Activated CD8-positive, alpha-beta T cell treated with anti-CD3 and anti-CD28 coated beads for 36 hours (primary cell): ENCODE measurements at regions of chr7 and their contacts with region 1.

Region 1: DNA sequence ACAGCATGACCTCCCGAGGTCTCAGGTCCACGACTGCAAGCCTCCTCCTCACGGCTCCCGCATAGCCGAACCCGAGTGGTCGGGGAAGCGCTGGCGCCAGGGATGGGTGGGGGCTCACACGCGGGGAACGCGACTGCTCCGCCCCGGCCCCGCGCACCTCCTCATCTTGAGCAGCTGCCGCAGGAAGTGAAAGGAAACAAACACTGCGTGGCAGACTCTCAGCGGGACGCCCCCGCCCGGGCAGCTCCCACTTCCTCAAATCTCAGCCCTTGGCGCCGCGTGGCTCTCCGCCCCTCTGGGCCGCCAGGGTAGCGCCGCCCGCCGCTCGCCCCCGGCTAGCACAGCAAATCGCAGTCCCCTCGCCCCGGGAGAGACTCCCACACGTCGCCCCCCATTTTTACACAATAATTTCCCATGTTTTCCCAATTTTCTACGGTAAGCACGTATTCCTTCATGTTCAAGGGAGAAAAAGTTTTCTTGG is at the start of gene TMEM243:
- DNase-seq: peak; percentile 92
- ATAC-seq: peak; percentile 48
- H3K4me3 Mint-ChIP-seq: peak within 1 kb of the TSS; percentile 98
- H3K27ac Mint-ChIP-seq: peak within 1 kb of the TSS; percentile 98
- H3K4me1 Mint-ChIP-seq: peaks cover 25% of the 10 kb centered on the region
- H3K27me3 Mint-ChIP-seq: peaks cover 2% of the 10 kb centered on the region
- CTCF ChIP-seq: no peak
- total RNA-seq, gene TMEM243: 67.0 to 67.2 TPM

Region 2: GRCh38 chr7:87059525-87060287 is 159.9 kb before region 1 on chr7 and contains the start of gene ELAPOR2:
- CTCF ChIA-PET with region 1: interaction called, 7 read pairs
- POLR2A ChIA-PET with region 1: no interaction called
- intact Hi-C with region 1: loop called (anchors 10 kb)
- DNase-seq: peak; percentile 79
- ATAC-seq: peak; percentile 96
- H3K4me3 Mint-ChIP-seq: peak within 1 kb of the TSS; percentile 79
- H3K27ac Mint-ChIP-seq: peak within 1 kb of the TSS; percentile 73
- H3K4me1 Mint-ChIP-seq: peaks cover 13% of the 10 kb centered on the region
- H3K27me3 Mint-ChIP-seq: peaks cover 17% of the 10 kb centered on the region
- CTCF ChIP-seq: peak; percentile 31
- total RNA-seq, gene ELAPOR2: 2.8 to 3.1 TPM

Region 3: GRCh38 chr7:87152107-87152844 is 67.3 kb before region 1 on chr7 and contains the start of gene DMTF1:
- CTCF ChIA-PET with region 1: interaction called, 9 read pairs
- POLR2A ChIA-PET with region 1: interaction called, 90 read pairs
- intact Hi-C with region 1: loop called (anchors 2 kb)
- DNase-seq: peak; percentile 89
- ATAC-seq: peak; percentile 84
- H3K4me3 Mint-ChIP-seq: peak within 1 kb of the TSS; percentile 99
- H3K27ac Mint-ChIP-seq: peak within 1 kb of the TSS; percentile 99
- H3K4me1 Mint-ChIP-seq: peaks cover 35% of the 10 kb centered on the region
- H3K27me3 Mint-ChIP-seq: no peaks in the 10 kb centered on the region
- CTCF ChIP-seq: no peak
- total RNA-seq, gene DMTF1: 63.0 to 65.1 TPM

Region 4: GRCh38 chr7:87188930-87189329 is 30.7 kb before region 1 on chr7:
- CTCF ChIA-PET with region 1: interaction called, 3 read pairs
- POLR2A ChIA-PET with region 1: interaction called, 60 read pairs
- intact Hi-C with region 1: no loop called
- DNase-seq: no peak
- ATAC-seq: no peak
- H3K4me3 Mint-ChIP-seq: no peak overlapping the region
- H3K27ac Mint-ChIP-seq: peak overlapping the region; percentile 48
- H3K4me1 Mint-ChIP-seq: peaks cover 44% of the 10 kb centered on the region
- H3K27me3 Mint-ChIP-seq: no peaks in the 10 kb centered on the region
- CTCF ChIP-seq: no peak

Region 5: DNA sequence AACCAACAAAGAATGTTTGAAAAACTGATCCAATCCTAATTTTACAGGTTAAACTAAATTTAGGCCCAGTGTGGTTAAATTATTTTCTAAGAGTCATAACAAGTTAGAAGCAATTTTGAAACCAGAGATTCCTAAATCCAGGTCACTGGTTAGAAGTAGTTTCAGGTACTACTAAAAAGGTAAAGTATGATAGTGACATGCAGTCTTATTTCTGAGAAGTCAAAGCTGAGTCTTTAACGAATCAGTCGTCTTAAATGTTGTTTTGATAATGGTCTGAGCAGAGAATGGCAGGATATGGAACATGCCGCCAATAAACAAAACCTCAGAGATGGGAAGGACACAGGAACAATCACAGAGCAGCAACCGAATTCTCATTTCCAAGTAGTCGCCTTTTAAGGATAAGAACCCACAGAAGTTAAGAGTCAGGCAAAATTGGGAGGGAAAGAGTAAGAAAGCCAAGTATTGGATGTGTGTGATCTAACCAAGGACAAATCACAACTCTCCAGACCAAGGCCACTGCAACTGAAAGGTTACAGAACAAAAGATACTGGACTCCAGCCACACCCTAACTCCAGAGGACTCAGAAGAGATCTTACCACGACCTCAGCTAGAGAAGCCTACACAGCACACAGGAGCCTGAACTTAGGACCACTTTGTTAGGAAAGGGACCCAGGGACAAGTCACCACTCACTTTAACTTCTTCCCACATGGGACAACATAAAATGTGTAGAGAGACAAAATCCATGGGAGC is 19.7 kb before region 1 on chr7:
- CTCF ChIA-PET with region 1: interaction called, 4 read pairs
- POLR2A ChIA-PET with region 1: interaction called, 60 read pairs
- intact Hi-C with region 1: no loop called
- DNase-seq: no peak
- ATAC-seq: no peak
- H3K4me3 Mint-ChIP-seq: no peak overlapping the region
- H3K27ac Mint-ChIP-seq: peak overlapping the region; percentile 62
- H3K4me1 Mint-ChIP-seq: peaks cover 71% of the 10 kb centered on the region
- H3K27me3 Mint-ChIP-seq: no peaks in the 10 kb centered on the region
- CTCF ChIP-seq: no peak

Region 6: DNA sequence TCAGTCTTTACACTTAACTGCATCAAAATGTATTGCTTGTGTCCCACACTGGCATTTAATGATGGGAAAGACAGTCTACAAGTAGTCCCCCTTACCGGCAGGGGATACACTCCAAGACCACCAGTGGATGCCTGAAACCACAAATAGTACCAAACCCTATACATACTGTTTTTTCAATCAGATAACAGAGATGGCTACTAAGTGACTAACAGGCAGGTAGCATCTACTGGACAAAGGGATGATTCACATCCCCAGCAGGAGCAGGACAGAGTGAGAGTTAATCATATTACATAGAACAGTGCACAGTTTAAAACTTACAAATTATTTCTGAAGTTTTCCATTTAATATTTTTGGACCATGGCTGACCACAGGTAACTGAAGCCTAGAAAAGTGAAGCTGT is 13.2 kb before region 1 on chr7:
- CTCF ChIA-PET with region 1: interaction called, 4 read pairs
- POLR2A ChIA-PET with region 1: interaction called, 50 read pairs
- intact Hi-C with region 1: no loop called
- DNase-seq: no peak
- ATAC-seq: no peak
- H3K4me3 Mint-ChIP-seq: no peak overlapping the region
- H3K27ac Mint-ChIP-seq: peak overlapping the region; percentile 60
- H3K4me1 Mint-ChIP-seq: peaks cover 77% of the 10 kb centered on the region
- H3K27me3 Mint-ChIP-seq: no peaks in the 10 kb centered on the region
- CTCF ChIP-seq: no peak

Region 7: GRCh38 chr7:87231256-87231655 is 11.7 kb after region 1 on chr7:
- CTCF ChIA-PET with region 1: interaction called, 14 read pairs
- POLR2A ChIA-PET with region 1: interaction called, 5 read pairs
- intact Hi-C with region 1: no loop called
- DNase-seq: no peak
- ATAC-seq: no peak
- H3K4me3 Mint-ChIP-seq: no peak overlapping the region
- H3K27ac Mint-ChIP-seq: no peak overlapping the region
- H3K4me1 Mint-ChIP-seq: peaks cover 7% of the 10 kb centered on the region
- H3K27me3 Mint-ChIP-seq: peaks cover 1% of the 10 kb centered on the region
- CTCF ChIP-seq: no peak